Transverse colon (tissue), 4 donors: ENCODE measurements at regions of chr1 and their contacts with region 1.

Region 1: DNA sequence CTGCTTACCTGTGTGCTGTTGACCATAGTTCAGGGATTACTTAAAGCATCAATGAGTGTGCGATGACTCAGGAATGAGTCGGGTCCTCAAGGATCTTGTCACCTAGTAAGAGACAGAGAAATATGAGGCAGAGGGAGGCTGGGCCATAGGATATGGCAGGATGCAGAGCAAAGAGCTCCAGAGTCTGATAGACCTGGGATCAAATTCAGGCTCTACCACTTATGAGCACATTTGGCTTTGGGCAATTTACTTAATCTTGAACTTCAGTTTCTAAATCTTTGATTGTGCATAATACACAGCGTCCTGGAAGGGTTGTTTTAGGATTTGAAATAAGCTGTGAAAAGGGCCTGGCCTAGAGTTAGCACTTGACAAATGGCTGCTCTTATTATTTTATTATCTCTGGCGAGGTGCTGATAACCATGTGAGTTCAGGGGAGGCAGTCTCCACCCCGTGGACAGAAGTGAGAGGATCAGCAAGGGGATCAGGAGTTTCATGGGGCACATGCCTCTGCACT is 94.5 kb downstream of the ROR1 start:
- DNase-seq: no peak
- H3K4me3 ChIP-seq: no peak overlapping the region
- H3K27ac ChIP-seq: peak overlapping the region in 3 of 4 donors; percentile 54 to 71 (median 57)
- H3K4me1 ChIP-seq: peaks cover 0 to 19% (median 10%) of the 10 kb centered on the region in 4 donors
- H3K27me3 ChIP-seq: no peaks in the 10 kb centered on the region
- CTCF ChIP-seq: peak in 2 of 5 experiments; percentile 11 to 22
- EP300 ChIP-seq: no peak
- POLR2A ChIP-seq: no peak

Region 2: GRCh38 chr1:63773815-63774616 is 94.3 kb before region 1 on chr1 and contains the start of gene ROR1:
- in situ Hi-C with region 1: no loop called
- intact Hi-C with region 1: loop called (anchors 5 kb)
- DNase-seq: peak; percentile 89
- H3K4me3 ChIP-seq: peak within 1 kb of the TSS; percentile 52 to 79 (median 66)
- H3K27ac ChIP-seq: peak within 1 kb of the TSS; percentile 87 to 92 (median 88)
- H3K4me1 ChIP-seq: peaks cover 0 to 28% (median 7%) of the 10 kb centered on the region in 4 donors
- H3K27me3 ChIP-seq: peaks cover 9% of the 10 kb centered on the region
- CTCF ChIP-seq: peak; percentile 56 to 77 (median 64)
- EP300 ChIP-seq: no peak
- POLR2A ChIP-seq: peak; percentile 47
- total RNA-seq, gene ROR1: 3.0 to 6.7 (median 4.6) TPM

Region 3: DNA sequence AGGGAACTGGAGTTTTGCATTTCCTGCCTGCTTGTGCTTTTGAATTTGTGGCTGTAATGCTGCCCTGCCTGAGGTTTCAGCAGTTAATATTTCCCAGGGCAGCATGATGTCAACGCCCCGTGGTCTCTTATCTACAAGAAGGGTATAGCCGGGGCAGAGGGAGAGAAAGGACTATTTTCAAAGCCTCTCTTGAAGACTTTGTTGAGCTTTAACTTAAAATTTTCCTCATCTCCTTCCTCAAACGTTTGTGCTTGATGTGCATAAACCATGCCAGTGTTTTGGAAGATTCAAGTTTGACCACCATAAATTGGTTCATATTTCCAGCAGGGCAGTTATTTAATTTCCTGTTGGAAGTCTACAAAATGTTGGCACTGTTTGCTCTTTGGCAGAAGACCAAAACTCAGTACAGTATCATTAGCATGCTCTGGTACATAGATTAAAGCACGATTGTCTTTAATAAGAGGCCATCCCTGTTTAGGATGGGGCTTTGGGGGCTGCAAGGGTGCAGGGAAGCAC is 51.1 kb before region 1 on chr1:
- in situ Hi-C with region 1: no loop called
- intact Hi-C with region 1: loop called (anchors 5 kb)
- DNase-seq: no peak
- H3K4me3 ChIP-seq: no peak overlapping the region
- H3K27ac ChIP-seq: no peak overlapping the region
- H3K4me1 ChIP-seq: peaks cover 8 to 38% (median 11%) of the 10 kb centered on the region in 4 donors
- H3K27me3 ChIP-seq: no peaks in the 10 kb centered on the region
- CTCF ChIP-seq: no peak
- EP300 ChIP-seq: no peak
- POLR2A ChIP-seq: no peak